ENCODE measurements at regions of chr1 and their contacts with region 1.

Region 1: GRCh38 chr1:77126307-77126706 is 92.9 kb downstream of the PIGK start:
- DNase-seq: peak; percentile 15
- ATAC-seq: peak; percentile 44
- H3K4me3 Mint-ChIP-seq: no peak overlapping the region
- H3K27ac Mint-ChIP-seq: no peak overlapping the region
- H3K4me1 Mint-ChIP-seq: no peaks in the 10 kb centered on the region
- H3K27me3 Mint-ChIP-seq: no peaks in the 10 kb centered on the region

Region 2: DNA sequence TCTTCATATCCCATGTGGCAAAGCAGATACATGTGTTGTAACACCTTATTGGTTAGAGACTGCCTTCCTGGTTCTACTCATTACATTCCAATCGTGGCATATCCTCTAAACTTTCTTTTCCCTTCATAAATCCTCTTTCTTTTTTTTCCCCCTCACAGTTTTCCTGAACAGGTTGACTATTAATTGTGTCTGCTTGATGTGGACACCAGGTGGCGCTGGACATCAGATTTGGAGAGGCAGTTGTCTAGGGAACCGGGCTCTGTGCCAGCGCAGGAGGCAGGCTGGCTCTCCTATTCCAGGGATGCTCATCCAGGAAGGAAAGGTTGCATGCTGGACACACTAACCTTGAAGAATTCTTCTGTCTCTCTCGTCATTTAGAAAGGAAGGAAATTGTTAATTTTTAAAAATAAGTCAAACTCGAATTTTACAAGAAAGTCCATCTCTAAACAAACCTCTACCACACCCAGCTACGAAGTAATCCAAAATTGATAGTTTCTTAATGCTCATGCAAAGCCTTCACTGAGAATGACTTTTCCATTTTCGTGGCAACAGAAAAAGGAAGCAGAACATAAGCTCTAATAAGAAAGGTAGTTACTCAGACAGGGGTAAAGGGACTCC is 1134.7 kb before region 1 on chr1:
- CTCF ChIA-PET with region 1: interaction called, 3 read pairs
- POLR2A ChIA-PET with region 1: no interaction called
- intact Hi-C with region 1: loop called in 1 of 2 experiments (anchors 5 kb)
- DNase-seq: peak; percentile 87
- ATAC-seq: peak; percentile 60
- H3K4me3 Mint-ChIP-seq: no peak overlapping the region
- H3K27ac Mint-ChIP-seq: no peak overlapping the region
- H3K4me1 Mint-ChIP-seq: no peaks in the 10 kb centered on the region
- H3K27me3 Mint-ChIP-seq: no peaks in the 10 kb centered on the region

Region 3: DNA sequence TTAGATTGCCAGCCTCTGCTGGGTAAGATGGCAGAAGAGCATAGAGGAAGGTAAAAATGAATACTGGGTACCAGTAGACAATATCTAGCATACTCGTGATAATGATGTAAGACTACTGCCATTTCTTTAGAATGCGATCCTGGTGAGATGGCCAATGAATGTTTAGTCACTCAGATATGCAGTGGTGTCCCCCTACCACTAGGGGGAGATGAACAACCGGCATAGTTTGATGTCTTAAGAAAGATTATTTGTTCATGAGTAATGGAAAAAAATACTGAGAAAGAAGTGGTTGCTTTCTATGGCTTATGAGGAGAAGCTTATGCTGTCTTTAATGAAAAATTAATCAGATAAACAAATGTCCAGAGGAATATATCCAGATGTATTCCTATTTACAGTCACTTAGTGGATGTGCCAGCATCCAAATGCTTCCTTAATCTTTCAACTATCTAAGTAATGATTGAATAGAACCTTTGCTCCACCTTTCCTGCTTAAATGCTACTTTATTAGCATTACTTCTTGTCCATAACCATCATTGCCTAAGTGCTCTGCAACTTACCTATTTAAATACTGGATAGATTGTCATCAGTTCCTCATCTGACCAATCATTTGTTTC is 795.2 kb before region 1 on chr1:
- CTCF ChIA-PET with region 1: no interaction called
- POLR2A ChIA-PET with region 1: no interaction called
- intact Hi-C with region 1: loop called (anchors 1 to 5 kb)
- DNase-seq: peak; percentile 58
- ATAC-seq: peak; percentile 91
- H3K4me3 Mint-ChIP-seq: no peak overlapping the region
- H3K27ac Mint-ChIP-seq: peak overlapping the region; percentile 63
- H3K4me1 Mint-ChIP-seq: peaks cover 8% of the 10 kb centered on the region
- H3K27me3 Mint-ChIP-seq: no peaks in the 10 kb centered on the region

Region 4: GRCh38 chr1:76901158-76901767 is 225.0 kb before region 1 on chr1:
- CTCF ChIA-PET with region 1: no interaction called
- POLR2A ChIA-PET with region 1: no interaction called
- intact Hi-C with region 1: loop called (anchors 5 kb)
- DNase-seq: peak; percentile 53
- ATAC-seq: peak; percentile 86
- H3K4me3 Mint-ChIP-seq: no peak overlapping the region
- H3K27ac Mint-ChIP-seq: no peak overlapping the region
- H3K4me1 Mint-ChIP-seq: no peaks in the 10 kb centered on the region
- H3K27me3 Mint-ChIP-seq: no peaks in the 10 kb centered on the region

Measured in activated CD4-positive, alpha-beta T cell treated with anti-CD3 and anti-CD28 coated beads for 36 hours (primary cell).